Activated B cell treated with CpG ODN at 0.5 μM for 24 hours (primary cell): ENCODE measurements at regions of chr6 and their contacts with region 1.

Region 1: DNA sequence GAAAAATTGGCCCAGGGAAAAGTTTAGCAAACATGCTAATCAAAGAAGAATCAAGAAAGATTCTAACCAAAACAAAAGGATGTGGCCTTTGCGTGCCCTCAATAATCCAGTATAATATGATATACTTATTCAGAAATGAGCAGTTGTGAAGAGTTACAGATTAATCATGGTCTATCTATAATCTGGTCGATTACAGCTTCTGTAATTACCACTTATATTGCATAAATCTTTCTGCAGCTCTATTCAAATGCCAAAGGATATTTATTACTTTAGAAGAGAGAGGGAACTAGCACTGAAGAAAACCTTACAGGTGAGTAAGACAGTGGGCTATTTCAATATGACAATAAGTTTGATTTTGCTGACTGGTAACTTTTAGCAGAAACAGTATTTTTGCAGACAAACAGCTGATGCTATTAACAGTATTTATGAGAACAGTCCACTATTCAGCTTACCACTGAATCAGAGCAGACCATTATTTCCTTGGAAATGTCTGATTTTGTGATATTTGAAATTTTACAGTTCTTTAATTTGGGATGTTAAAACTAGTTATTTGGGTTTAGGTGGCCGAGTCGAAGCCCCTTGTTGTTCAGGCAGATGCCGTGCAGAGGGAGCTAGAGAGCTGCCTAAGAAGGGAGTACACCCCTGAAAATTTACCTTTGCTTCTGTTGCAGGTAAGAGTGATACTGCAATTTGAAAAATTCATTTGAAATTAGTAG is 92.2 kb downstream of the CEP57L1 start:
- DNase-seq: peak; percentile 37
- ATAC-seq: peak; percentile 81
- H3K4me3 Mint-ChIP-seq: no peak overlapping the region
- H3K27ac Mint-ChIP-seq: no peak overlapping the region
- H3K4me1 Mint-ChIP-seq: peaks cover 9% of the 10 kb centered on the region
- H3K27me3 Mint-ChIP-seq: peaks cover 3% of the 10 kb centered on the region
- CTCF ChIP-seq: peak; percentile 41

Region 2: DNA sequence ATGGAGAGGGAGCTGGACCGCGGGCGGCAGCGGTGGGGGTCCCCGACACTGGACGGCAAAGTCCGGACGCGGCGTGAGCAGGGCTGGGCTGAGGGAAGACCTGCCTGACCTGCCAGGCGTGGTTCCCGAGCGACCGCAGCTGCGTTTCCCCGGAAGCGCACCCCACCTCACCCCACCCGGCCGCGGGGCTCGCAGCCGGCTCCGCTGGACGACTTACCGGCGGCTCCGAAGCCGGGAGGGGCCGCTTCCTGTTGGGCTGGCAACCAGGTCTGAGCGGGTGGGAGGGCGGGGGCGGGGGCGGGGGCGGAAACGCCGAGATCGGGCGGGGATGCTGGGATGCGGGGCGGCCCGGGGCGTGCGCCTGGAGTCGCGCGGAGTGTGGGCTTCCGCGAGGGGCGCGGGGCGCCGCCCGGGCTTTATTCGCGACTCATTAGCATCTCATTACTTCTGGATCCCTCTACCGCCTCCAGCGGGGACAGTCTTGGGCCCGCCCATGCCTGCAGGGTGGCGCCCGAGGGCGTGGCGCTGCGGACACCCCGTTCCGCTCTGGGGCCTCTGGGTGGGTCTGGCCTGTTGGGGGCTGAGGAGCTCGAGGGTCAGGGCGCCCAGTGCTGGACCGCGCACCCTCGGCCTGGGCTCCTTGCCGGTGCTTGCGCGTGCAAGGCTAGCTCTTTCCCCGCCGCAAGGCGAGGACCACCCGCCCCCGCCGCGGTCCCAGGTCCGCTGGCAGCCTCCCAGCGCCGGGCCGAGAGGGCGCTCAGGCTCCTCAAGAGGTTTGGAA is 268.1 kb after region 1 on chr6 and contains the start of gene MICAL1:
- CTCF ChIA-PET with region 1: no interaction called
- POLR2A ChIA-PET with region 1: no interaction called
- intact Hi-C with region 1: loop called (anchors 5 kb)
- DNase-seq: peak; percentile 82
- ATAC-seq: peak; percentile 58
- H3K4me3 Mint-ChIP-seq: peak within 1 kb of the TSS; percentile 97
- H3K27ac Mint-ChIP-seq: peak within 1 kb of the TSS; percentile 98
- H3K4me1 Mint-ChIP-seq: peaks cover 80% of the 10 kb centered on the region
- H3K27me3 Mint-ChIP-seq: no peaks in the 10 kb centered on the region
- CTCF ChIP-seq: no peak
- total RNA-seq, gene MICAL1: 104 and 120 TPM in 2 replicates

Region 3: DNA sequence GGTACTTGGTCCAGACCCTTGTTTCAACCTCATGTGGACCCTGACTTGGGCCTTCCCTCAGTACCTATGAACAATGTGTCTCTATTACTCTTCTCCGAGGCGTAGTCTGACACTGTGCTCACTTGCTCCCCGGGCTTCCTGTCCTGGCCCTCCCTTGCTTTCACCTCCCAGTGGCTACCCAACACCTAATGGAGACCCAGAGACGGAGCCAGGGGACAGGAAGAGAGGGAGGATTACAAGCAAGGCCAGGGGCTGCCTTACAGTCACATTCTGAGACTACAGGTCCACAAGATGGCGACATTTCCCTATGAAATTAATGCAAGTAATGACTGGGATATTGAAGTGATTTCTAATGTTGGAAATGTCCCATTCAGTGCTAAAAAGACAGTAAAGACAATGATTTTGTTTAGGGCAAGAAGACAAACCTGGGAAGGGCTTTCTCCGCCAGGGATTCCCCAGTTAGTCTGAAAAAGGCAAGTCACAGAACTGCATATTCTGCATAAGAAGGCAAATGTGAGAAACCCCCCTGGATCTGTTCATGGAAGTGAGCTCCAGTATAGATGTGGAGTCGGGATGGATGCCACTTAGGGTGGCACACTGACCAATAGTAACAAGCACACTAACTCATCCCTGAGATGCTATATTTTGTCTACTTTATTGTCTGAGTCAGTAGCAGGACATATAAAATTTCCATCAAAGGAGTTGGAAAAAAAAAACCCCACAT is 339.5 kb after region 1 on chr6:
- CTCF ChIA-PET with region 1: interaction called, 5 read pairs
- POLR2A ChIA-PET with region 1: no interaction called
- intact Hi-C with region 1: loop called (anchors 5 kb)
- DNase-seq: peak; percentile 27
- ATAC-seq: peak; percentile 58
- H3K4me3 Mint-ChIP-seq: no peak overlapping the region
- H3K27ac Mint-ChIP-seq: no peak overlapping the region
- H3K4me1 Mint-ChIP-seq: peaks cover 2% of the 10 kb centered on the region
- H3K27me3 Mint-ChIP-seq: no peaks in the 10 kb centered on the region
- CTCF ChIP-seq: no peak

Region 4: GRCh38 chr6:110039364-110039980 is 851.9 kb after region 1 on chr6:
- CTCF ChIA-PET with region 1: interaction called, 17 read pairs
- POLR2A ChIA-PET with region 1: no interaction called
- intact Hi-C with region 1: loop called (anchors 1 kb)
- DNase-seq: peak; percentile 75
- ATAC-seq: peak; percentile 87
- H3K4me3 Mint-ChIP-seq: peak overlapping the region; percentile 89
- H3K27ac Mint-ChIP-seq: peak overlapping the region; percentile 91
- H3K4me1 Mint-ChIP-seq: peaks cover 24% of the 10 kb centered on the region
- H3K27me3 Mint-ChIP-seq: no peaks in the 10 kb centered on the region
- CTCF ChIP-seq: no peak

Region 5: DNA sequence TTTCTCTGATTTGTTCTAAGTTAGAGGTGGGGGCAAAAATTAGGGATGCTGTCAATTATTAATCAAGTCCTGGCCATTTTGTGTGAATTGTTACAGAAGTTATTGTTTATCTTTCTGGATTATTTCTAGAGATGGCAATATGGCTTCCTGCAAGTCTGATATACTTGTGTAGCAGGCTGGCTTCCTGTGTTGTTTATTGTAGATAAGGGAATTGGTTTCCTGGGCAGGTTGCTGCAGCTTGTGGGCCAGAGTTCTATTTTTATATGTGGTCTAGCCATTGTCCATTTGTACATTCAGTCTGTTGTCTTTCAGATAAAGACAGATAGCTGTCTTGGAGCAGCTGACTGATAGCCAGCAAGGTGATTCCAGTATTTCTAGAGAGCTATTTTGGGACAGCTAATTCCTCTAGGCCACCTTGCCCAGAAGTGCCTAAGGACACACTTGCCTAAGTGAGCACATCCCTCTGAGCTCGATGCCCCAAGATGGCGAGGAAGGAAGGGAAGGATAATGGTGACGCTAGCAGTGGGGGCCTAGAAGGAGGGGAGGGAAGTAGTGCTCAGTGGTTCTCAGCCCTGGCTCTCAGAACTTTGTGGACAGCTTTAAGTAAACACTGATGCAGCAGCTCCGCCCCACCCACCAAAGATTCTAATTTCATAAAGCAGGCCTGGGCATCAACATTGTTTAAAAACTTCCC is 1202.3 kb after region 1 on chr6:
- CTCF ChIA-PET with region 1: interaction called, 8 read pairs
- POLR2A ChIA-PET with region 1: no interaction called
- intact Hi-C with region 1: loop called (anchors 2 kb)
- DNase-seq: no peak
- ATAC-seq: no peak
- H3K4me3 Mint-ChIP-seq: no peak overlapping the region
- H3K27ac Mint-ChIP-seq: no peak overlapping the region
- H3K4me1 Mint-ChIP-seq: no peaks in the 10 kb centered on the region
- H3K27me3 Mint-ChIP-seq: no peaks in the 10 kb centered on the region
- CTCF ChIP-seq: no peak